ENCODE measurements at regions of chr1 and their contacts with region 1.

Region 1: GRCh38 chr1:45303582-45304310 is 22.9 kb upstream of the HPDL start:
- DNase-seq: peak; percentile 98
- H3K27ac ChIP-seq: peak overlapping the region; percentile 86
- CTCF ChIP-seq: peak; percentile 78

Region 2: DNA sequence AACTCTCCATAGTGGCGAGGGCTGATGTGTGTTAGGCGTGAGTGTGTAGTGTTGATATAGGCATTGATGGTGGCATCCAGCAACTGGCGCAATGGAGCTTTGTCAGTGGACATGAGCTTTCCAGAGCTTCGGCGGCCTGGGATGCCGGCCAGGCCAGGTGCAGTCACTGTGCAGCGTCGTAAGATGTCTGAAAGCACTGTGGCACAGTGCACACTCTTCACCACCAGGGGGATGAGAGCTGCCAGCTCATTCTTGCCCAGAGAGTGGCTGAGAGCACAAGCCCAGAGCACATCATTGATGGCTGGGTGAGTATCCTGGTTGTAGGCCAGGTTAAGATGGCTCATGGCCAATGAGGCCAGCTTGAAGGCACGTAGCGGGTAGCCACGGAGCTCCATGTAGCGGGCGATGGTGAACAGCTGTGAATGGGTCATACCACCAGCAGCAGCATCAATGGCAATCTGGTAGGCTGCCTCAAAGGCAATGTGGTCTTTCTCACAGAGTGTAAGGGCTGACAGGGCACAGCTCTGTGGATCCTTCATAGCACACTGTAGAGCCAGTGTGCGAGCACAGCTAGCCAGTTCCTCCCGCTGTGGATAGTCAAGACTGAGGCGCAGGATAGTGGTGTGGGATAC is 285.0 kb before region 1 on chr1:
- CTCF ChIA-PET with region 1: interaction called, 29 read pairs
- POLR2A ChIA-PET with region 1: interaction called, 8 read pairs
- DNase-seq: peak; percentile 29
- H3K27ac ChIP-seq: no peak overlapping the region
- CTCF ChIP-seq: peak; percentile 64

Region 3: GRCh38 chr1:45326627-45327623 is 23.2 kb after region 1 on chr1 and contains the start of gene HPDL:
- CTCF ChIA-PET with region 1: interaction called, 3 read pairs
- POLR2A ChIA-PET with region 1: interaction called, 13 read pairs
- DNase-seq: peak; percentile 59
- H3K27ac ChIP-seq: peak within 1 kb of the TSS; percentile 57
- CTCF ChIP-seq: no peak